Posterior vena cava (tissue), 2 donors: ENCODE measurements at regions of chr4 and their contacts with region 1.

Region 1: GRCh38 chr4:57966987-57967760 is 857.0 kb upstream of the IGFBP7 start:
- DNase-seq: no peak

Region 2: GRCh38 chr4:57342411-57342810 is 624.8 kb before region 1 on chr4:
- intact Hi-C with region 1: loop called in 1 of 2 experiments (anchors 5 kb)
- DNase-seq: no peak